ENCODE measurements at regions of chr11 and their contacts with region 1.

Region 1: DNA sequence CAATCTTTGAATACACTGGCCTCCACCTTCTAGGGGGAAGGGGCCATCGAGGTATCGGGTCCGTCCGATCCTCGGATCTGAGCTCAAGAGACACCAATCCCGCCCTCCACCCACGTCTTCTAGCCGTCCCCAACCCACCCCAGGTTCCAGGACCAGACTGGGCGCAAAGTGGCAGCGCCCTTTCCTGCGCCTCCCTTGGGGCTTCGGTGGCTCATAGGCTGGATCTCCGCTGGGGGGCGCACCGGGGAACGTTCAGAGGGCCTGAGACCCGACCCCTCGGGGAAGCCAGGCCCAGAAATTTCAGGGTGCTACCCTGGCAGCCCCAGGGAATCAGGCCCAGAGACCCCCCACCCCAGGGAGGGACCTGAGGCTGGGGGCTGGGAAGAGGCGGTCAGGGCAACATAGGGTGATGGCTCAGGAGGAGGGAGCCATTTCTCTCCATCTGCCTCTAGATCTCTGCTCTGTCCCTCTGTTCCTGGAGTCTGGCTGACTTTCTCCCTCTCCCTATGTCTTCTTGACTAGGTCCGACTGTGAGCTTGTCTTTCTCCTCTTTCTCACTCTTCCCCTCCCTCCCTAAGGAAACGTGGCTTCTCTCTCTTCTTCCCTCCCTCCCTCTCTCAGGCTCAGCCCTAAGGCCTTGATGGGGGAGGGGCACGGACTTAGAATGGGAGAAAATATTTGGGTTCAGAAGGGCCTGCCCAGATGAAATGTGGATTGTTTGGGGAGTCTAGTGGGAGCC is 1.1 kb downstream of the CREB3L1 start:
- DNase-seq: peak in 1 of 2 experiments; percentile 92
- H3K4me3 ChIP-seq: peak overlapping the region; percentile 54 to 81 (median 64)
- H3K27ac ChIP-seq: no peak overlapping the region
- H3K4me1 ChIP-seq: peaks cover 18 to 35% (median 24%) of the 10 kb centered on the region in 4 experiments; a peak in 6 of 7 replicates
- H3K27me3 ChIP-seq: no peaks in the 10 kb centered on the region
- CTCF ChIP-seq: peak; percentile 68 to 86 (median 72)
- EP300 ChIP-seq: no peak
- POLR2A ChIP-seq: no peak
- RAD21 ChIP-seq: peak; percentile 43 to 69

Region 2: GRCh38 chr11:46265764-46266163 is 12.8 kb before region 1 on chr11:
- CTCF ChIA-PET with region 1: interaction called, 53 read pairs
- POLR2A ChIA-PET with region 1: interaction called, 4 read pairs
- DNase-seq: no peak
- H3K4me3 ChIP-seq: no peak overlapping the region
- H3K27ac ChIP-seq: no peak overlapping the region
- H3K4me1 ChIP-seq: 0 out of 7 replicates have a peak, but pooled peaks cover 0 to 2% (median 0%) of the 10 kb centered on the region in 4 experiments
- H3K27me3 ChIP-seq: no peaks in the 10 kb centered on the region
- CTCF ChIP-seq: no peak
- EP300 ChIP-seq: no peak
- POLR2A ChIP-seq: no peak
- RAD21 ChIP-seq: no peak

Measured in H1 (cell line).